ENCODE measurements at regions of chr6 and their contacts with region 1.

Region 1: DNA sequence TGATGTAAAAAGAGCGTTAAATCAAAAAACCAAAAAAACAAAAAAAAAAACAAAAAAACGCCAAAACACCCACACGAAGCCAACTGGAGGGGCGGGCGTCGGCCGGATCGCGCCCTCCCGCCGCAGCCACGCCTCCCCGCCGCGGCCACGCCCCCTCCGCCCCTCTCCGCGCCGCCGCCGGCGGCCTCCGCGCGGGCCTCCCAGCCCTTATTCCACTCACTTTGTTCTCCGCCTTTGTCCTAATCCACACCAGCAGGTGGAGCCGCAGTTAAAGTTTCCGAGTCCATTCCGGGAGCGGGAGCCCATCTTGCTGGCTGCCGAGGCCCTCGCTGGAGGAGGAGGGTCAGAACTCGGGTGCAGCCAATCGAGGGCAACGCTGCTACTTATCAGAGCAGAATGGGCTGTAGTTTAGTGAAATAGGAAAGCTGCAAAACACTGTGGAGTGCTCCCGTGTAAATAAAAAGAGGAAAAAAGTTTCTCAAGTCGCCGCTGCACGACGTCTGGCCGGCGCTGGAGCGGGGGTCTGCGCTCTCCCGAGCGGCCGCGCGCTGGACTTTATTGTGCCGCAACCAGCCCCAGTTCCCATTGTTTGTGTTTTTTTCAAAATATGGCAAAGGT is at the start of gene ASF1A:
- DNase-seq: peak; percentile 97
- ATAC-seq: peak; percentile 77
- H3K4me3 Mint-ChIP-seq: peak within 1 kb of the TSS; percentile 91
- H3K27ac Mint-ChIP-seq: peak within 1 kb of the TSS; percentile 99
- H3K4me1 Mint-ChIP-seq: peaks cover 55% of the 10 kb centered on the region
- H3K27me3 Mint-ChIP-seq: no peaks in the 10 kb centered on the region
- CTCF ChIP-seq: peak; percentile 8
- total RNA-seq, gene ASF1A: 36.4 to 39.0 TPM

Region 2: GRCh38 chr6:118800394-118801071 is 93.4 kb before region 1 on chr6:
- CTCF ChIA-PET with region 1: interaction called, 18 read pairs
- POLR2A ChIA-PET with region 1: interaction called, 3 read pairs
- intact Hi-C with region 1: no loop called
- DNase-seq: peak; percentile 95
- ATAC-seq: peak; percentile 97
- H3K4me3 Mint-ChIP-seq: peak overlapping the region; percentile 63
- H3K27ac Mint-ChIP-seq: peak overlapping the region; percentile 76
- H3K4me1 Mint-ChIP-seq: peaks cover 34% of the 10 kb centered on the region
- H3K27me3 Mint-ChIP-seq: no peaks in the 10 kb centered on the region
- CTCF ChIP-seq: peak; percentile 85

Region 3: GRCh38 chr6:118810420-118811027 is 83.4 kb before region 1 on chr6:
- CTCF ChIA-PET with region 1: interaction called, 8 read pairs
- POLR2A ChIA-PET with region 1: interaction called, 4 read pairs
- intact Hi-C with region 1: loop called (anchors 5 kb)
- DNase-seq: peak; percentile 89
- ATAC-seq: peak; percentile 95
- H3K4me3 Mint-ChIP-seq: peak overlapping the region; percentile 20
- H3K27ac Mint-ChIP-seq: peak overlapping the region; percentile 93
- H3K4me1 Mint-ChIP-seq: peaks cover 57% of the 10 kb centered on the region
- H3K27me3 Mint-ChIP-seq: no peaks in the 10 kb centered on the region
- CTCF ChIP-seq: no peak

Region 4: GRCh38 chr6:118825661-118826060 is 68.3 kb before region 1 on chr6:
- CTCF ChIA-PET with region 1: no interaction called
- POLR2A ChIA-PET with region 1: no interaction called
- intact Hi-C with region 1: no loop called
- DNase-seq: no peak
- ATAC-seq: no peak
- H3K4me3 Mint-ChIP-seq: no peak overlapping the region
- H3K27ac Mint-ChIP-seq: no peak overlapping the region
- H3K4me1 Mint-ChIP-seq: peaks cover 3% of the 10 kb centered on the region
- H3K27me3 Mint-ChIP-seq: no peaks in the 10 kb centered on the region
- CTCF ChIP-seq: no peak

Region 5: GRCh38 chr6:118843685-118844390 is 50.1 kb before region 1 on chr6:
- CTCF ChIA-PET with region 1: no interaction called
- POLR2A ChIA-PET with region 1: interaction called, 3 read pairs
- intact Hi-C with region 1: loop called (anchors 2 kb)
- DNase-seq: peak; percentile 53
- ATAC-seq: peak; percentile 85
- H3K4me3 Mint-ChIP-seq: peak overlapping the region; percentile 21
- H3K27ac Mint-ChIP-seq: peak overlapping the region; percentile 58
- H3K4me1 Mint-ChIP-seq: peaks cover 39% of the 10 kb centered on the region
- H3K27me3 Mint-ChIP-seq: no peaks in the 10 kb centered on the region
- CTCF ChIP-seq: no peak

Region 6: DNA sequence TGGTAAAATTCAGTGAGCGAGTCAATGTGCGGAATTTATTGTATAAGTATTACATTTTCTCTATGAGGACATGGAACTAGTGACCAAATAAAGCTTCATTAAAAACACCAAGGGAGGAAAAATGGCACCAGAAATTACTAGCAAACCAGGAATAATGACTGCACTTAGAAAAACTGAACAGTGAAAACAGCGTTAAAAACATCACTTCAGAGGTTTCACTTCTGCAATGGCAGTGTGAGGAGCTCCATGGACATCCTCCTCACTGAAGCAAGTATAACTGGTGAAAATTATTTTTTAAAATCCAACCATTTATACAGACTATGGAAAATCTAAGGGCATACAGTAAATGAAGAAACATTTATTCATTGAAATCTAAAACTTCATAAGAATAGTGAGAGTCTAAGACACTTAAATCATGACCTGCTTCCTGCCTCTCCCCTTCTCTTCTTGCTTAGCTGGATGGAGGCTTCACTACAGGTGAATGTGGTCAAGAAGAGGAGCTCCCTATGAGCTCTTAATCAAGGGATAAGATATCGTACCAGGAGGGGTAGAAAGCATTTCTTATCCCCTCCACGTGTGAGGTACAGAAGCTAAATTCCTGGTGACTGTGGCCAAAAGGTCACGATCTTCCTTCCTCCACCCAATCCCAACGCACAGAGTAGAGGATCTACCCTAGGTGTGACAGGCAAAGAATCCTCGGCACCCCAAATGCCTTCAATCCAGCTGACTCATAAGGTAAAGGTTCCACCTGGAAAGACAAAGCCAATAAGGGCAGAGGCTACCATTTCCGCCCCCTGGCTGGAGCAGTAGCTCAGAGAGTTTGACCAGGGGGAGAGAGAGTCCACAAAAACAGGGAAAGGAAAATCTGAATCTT is 12.2 kb before region 1 on chr6:
- CTCF ChIA-PET with region 1: interaction called, 6 read pairs
- POLR2A ChIA-PET with region 1: interaction called, 11 read pairs
- intact Hi-C with region 1: no loop called
- DNase-seq: no peak
- ATAC-seq: no peak
- H3K4me3 Mint-ChIP-seq: peak overlapping the region; percentile 2
- H3K27ac Mint-ChIP-seq: no peak overlapping the region
- H3K4me1 Mint-ChIP-seq: peaks cover 73% of the 10 kb centered on the region
- H3K27me3 Mint-ChIP-seq: no peaks in the 10 kb centered on the region
- CTCF ChIP-seq: no peak

Region 7: GRCh38 chr6:118905851-118906250 is 11.9 kb after region 1 on chr6:
- CTCF ChIA-PET with region 1: interaction called, 19 read pairs
- POLR2A ChIA-PET with region 1: interaction called, 5 read pairs
- intact Hi-C with region 1: no loop called
- DNase-seq: no peak
- ATAC-seq: peak; percentile 65
- H3K4me3 Mint-ChIP-seq: no peak overlapping the region
- H3K27ac Mint-ChIP-seq: peak overlapping the region; percentile 79
- H3K4me1 Mint-ChIP-seq: peaks cover 63% of the 10 kb centered on the region
- H3K27me3 Mint-ChIP-seq: no peaks in the 10 kb centered on the region
- CTCF ChIP-seq: no peak

Region 8: GRCh38 chr6:119078376-119079282 is 184.7 kb after region 1 on chr6 and contains the start of gene FAM184A:
- CTCF ChIA-PET with region 1: interaction called, 4 read pairs
- POLR2A ChIA-PET with region 1: interaction called, 3 read pairs
- intact Hi-C with region 1: loop called (anchors 5 kb)
- DNase-seq: peak; percentile 62
- ATAC-seq: peak; percentile 57
- H3K4me3 Mint-ChIP-seq: peak within 1 kb of the TSS; percentile 85
- H3K27ac Mint-ChIP-seq: peak within 1 kb of the TSS; percentile 81
- H3K4me1 Mint-ChIP-seq: peaks cover 36% of the 10 kb centered on the region
- H3K27me3 Mint-ChIP-seq: peaks cover 3% of the 10 kb centered on the region
- CTCF ChIP-seq: no peak
- total RNA-seq, gene FAM184A: 3.2 to 4.8 TPM